ENCODE measurements at regions of chr9 and their contacts with region 1.

Region 1: DNA sequence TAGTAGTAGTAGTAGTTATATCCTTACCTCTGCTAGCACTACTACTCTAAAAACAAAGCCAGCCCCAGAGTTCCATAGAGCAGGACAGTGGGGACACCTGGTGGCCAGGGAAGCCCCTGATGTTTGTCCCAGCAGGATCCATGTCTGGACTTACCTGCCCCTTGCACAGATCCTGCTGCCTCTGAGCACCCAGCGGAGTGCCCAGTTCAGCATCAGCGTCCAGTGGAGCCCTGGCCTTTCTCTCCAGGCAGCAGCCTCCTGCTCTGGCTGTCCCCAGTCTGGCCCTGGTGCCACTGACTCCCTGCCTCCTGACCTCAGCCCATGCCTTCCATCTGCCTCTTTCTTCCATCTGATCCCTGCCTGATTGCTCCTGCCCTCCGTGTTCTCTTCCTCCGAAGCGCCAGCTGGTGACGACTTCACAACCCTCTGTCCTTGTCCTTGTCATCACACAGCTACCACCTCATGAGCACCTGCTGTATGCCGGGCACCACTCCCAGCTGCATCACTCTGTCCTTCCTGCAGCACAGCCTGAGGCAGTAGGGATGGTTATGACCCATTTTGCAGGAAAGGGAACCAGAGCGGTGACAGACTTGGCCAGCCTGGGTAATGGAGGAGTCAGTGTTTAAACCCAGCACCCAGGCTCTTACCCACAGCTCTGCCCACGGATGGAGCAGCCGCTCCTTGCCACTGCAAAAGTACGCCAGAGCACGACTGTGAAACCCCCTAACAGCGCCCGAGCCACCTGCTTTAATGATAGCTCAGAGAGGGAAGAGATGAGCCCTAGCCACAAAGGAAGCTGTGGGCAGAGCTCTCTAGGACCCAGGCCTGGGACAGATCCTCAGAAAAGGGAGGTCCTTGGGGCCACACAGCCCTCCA is 11.5 kb downstream of the SARDH start:
- DNase-seq: peak; percentile 83
- H3K4me3 Mint-ChIP-seq: no peak overlapping the region
- H3K27ac Mint-ChIP-seq: no peak overlapping the region
- H3K4me1 Mint-ChIP-seq: peaks cover 4% of the 10 kb centered on the region
- H3K27me3 Mint-ChIP-seq: peaks cover 10% of the 10 kb centered on the region

Region 2: GRCh38 chr9:133532937-133533668 is 193.5 kb before region 1 on chr9:
- CTCF ChIA-PET with region 1: interaction called, 16 read pairs
- intact Hi-C with region 1: loop called (anchors 1 kb)
- DNase-seq: peak; percentile 89
- H3K4me3 Mint-ChIP-seq: peak overlapping the region; percentile 10
- H3K27ac Mint-ChIP-seq: no peak overlapping the region
- H3K4me1 Mint-ChIP-seq: peaks cover 14% of the 10 kb centered on the region
- H3K27me3 Mint-ChIP-seq: no peaks in the 10 kb centered on the region

Region 3: GRCh38 chr9:133558191-133559126 is 168.2 kb before region 1 on chr9:
- CTCF ChIA-PET with region 1: no interaction called
- intact Hi-C with region 1: no loop called
- DNase-seq: peak; percentile 68
- H3K4me3 Mint-ChIP-seq: no peak overlapping the region
- H3K27ac Mint-ChIP-seq: no peak overlapping the region
- H3K4me1 Mint-ChIP-seq: peaks cover 18% of the 10 kb centered on the region
- H3K27me3 Mint-ChIP-seq: no peaks in the 10 kb centered on the region

Region 4: GRCh38 chr9:133589454-133590227 is 137.0 kb before region 1 on chr9:
- CTCF ChIA-PET with region 1: interaction called, 14 read pairs
- intact Hi-C with region 1: loop called (anchors 2 kb)
- DNase-seq: peak; percentile 63
- H3K4me3 Mint-ChIP-seq: no peak overlapping the region
- H3K27ac Mint-ChIP-seq: no peak overlapping the region
- H3K4me1 Mint-ChIP-seq: peaks cover 6% of the 10 kb centered on the region
- H3K27me3 Mint-ChIP-seq: peaks cover 9% of the 10 kb centered on the region

Region 5: DNA sequence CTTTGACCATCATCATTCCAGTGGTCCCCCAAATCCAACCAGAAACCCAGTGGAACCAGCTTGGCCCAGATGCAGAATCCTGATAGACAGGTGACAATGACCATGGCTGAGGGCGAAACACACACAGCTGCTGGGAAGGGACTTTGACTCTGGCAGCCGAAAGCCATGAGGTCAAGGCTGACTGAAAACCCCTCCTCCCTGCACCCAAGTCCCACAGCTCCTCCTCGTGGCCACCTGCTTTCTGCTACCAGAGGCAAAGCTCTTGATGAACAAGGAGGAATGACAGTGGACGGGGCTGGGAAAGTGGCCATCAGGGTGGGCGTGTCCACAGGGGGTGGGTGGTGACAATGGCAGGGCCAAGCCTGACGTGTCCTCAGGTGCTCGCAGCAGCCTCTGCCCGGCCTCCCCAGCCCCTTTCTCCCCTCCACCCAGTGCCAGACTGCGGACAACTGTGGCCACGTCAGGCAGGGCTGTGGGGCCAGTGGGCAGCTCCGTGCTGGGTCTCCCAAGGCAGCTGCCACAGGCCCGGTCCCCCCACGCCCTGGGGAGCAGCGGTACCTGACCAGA is 42.3 kb after region 1 on chr9:
- CTCF ChIA-PET with region 1: no interaction called
- intact Hi-C with region 1: no loop called
- DNase-seq: peak; percentile 7
- H3K4me3 Mint-ChIP-seq: no peak overlapping the region
- H3K27ac Mint-ChIP-seq: no peak overlapping the region
- H3K4me1 Mint-ChIP-seq: no peaks in the 10 kb centered on the region
- H3K27me3 Mint-ChIP-seq: no peaks in the 10 kb centered on the region

Region 6: GRCh38 chr9:133792721-133793470 is 66.3 kb after region 1 on chr9:
- CTCF ChIA-PET with region 1: no interaction called
- intact Hi-C with region 1: no loop called
- DNase-seq: peak; percentile 63
- H3K4me3 Mint-ChIP-seq: no peak overlapping the region
- H3K27ac Mint-ChIP-seq: no peak overlapping the region
- H3K4me1 Mint-ChIP-seq: peaks cover 2% of the 10 kb centered on the region
- H3K27me3 Mint-ChIP-seq: peaks cover 2% of the 10 kb centered on the region

Measured in activated naive CD4-positive, alpha-beta T cell treated with anti-CD3 and anti-CD28 coated beads for 36 hours (primary cell).